Mucosa of descending colon (tissue), 3 donors: ENCODE measurements at regions of chr3 and their contacts with region 1.

Region 1: GRCh38 chr3:124995460-124995994 is 60.3 kb downstream of the HEG1 start:
- DNase-seq: peak in 2 of 3 donors; percentile 59 to 76
- ATAC-seq: peak; percentile 80
- H3K4me3 ChIP-seq: no peak overlapping the region
- H3K4me1 ChIP-seq: no peaks in the 10 kb centered on the region
- CTCF ChIP-seq: peak; percentile 52

Region 2: GRCh38 chr3:125168711-125169393 is 173.3 kb after region 1 on chr3:
- intact Hi-C with region 1: no loop called
- DNase-seq: no peak
- ATAC-seq: no peak
- H3K4me3 ChIP-seq: no peak overlapping the region
- H3K4me1 ChIP-seq: peaks cover 13% of the 10 kb centered on the region
- CTCF ChIP-seq: no peak

Region 3: GRCh38 chr3:125437631-125438435 is 442.3 kb after region 1 on chr3:
- intact Hi-C with region 1: loop called (anchors 5 kb)
- DNase-seq: peak in 2 of 3 donors; percentile 61 to 78
- ATAC-seq: peak; percentile 46
- H3K4me3 ChIP-seq: no peak overlapping the region
- H3K4me1 ChIP-seq: peaks cover 11% of the 10 kb centered on the region
- CTCF ChIP-seq: peak; percentile 89